ENCODE measurements at regions of chr6 and their contacts with region 1.

Region 1: GRCh38 chr6:39309942-39310531 is 4.2 kb downstream of the KCNK17 start:
- DNase-seq: peak in 1 of 2 donors; percentile 53
- H3K4me3 ChIP-seq: no peak overlapping the region
- CTCF ChIP-seq: peak in 1 of 3 donors; percentile 49
- POLR2A ChIP-seq: no peak

Region 2: GRCh38 chr6:38973178-38974054 is 336.6 kb before region 1 on chr6:
- intact Hi-C with region 1: loop called (anchors 5 kb)
- DNase-seq: no peak
- H3K4me3 ChIP-seq: no peak overlapping the region
- CTCF ChIP-seq: no peak
- POLR2A ChIP-seq: no peak

Region 3: GRCh38 chr6:39203852-39204375 is 106.1 kb before region 1 on chr6:
- intact Hi-C with region 1: no loop called
- DNase-seq: no peak
- H3K4me3 ChIP-seq: no peak overlapping the region
- CTCF ChIP-seq: no peak
- POLR2A ChIP-seq: no peak

Region 4: GRCh38 chr6:39330057-39330456 is 20.0 kb after region 1 on chr6:
- intact Hi-C with region 1: no loop called
- DNase-seq: no peak
- H3K4me3 ChIP-seq: no peak overlapping the region
- CTCF ChIP-seq: no peak
- POLR2A ChIP-seq: no peak